ENCODE measurements at regions of chr11 and their contacts with region 1.

Region 1: GRCh38 chr11:10792398-10792975 is 16.2 kb downstream of the EIF4G2 start:
- DNase-seq: peak; percentile 87 to 93
- ATAC-seq: peak; percentile 85

Region 2: DNA sequence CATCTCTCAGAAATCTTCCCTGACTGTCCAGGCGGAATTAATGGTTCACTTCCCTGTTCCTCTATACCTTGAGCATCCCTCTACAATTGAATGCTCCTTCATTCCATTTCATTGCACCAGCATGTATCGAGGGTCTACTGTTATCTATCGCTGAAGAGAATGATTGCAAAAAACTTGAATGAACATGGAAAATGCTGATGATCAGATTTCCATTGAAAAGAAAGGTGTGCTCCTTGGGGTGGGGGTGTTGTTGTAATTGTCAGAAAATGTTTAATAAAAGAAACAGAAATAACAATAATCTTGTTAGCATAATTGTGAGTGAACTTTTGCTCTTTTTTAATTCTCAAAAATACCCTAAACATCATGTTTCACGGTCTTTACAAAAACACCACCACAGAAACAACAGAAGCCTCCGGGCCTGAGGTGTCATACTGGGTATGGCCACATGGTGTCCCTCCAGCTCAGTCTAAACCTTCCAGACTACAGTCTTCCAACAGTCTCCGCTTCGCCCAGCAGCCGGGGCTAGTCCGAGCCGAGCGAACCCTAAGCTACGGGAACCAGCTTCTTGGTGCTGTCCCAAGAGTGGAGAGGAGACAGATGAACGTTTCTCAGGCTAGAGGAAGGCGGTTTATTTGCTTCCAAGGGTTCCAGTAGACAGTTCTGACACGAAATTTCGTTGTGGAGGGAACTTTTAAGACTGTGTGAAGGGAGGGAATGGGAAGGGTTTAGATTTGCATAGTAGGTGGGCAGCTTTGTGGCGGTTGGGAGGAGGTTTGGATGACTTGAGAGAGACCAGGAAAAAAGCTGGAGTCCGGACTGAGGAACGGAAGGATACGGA is 141.2 kb after region 1 on chr11:
- intact Hi-C with region 1: loop called in 1 of 2 experiments (anchors 10 kb)
- DNase-seq: peak; percentile 91 to 92
- ATAC-seq: peak; percentile 72

Region 3: DNA sequence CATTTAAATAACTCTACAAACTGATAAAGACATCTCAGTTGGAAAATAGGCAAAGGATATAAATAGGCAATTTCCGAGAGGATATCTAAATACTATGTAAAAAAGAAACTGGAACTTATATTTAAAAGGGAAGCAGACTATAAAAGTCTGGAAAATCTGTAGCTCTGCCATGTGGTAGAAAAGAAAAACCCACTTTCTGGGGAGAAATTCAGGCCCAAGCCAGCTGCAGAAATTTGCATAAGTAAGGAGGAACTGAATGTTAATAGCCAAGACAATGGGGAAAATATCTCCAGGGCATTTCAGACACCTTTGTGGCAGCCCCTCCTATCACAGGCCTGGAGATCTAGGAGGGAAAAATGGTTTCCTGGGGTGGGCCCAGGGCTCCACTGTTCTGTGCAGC is 163.1 kb after region 1 on chr11:
- intact Hi-C with region 1: no loop called
- DNase-seq: no peak
- ATAC-seq: no peak

Region 4: GRCh38 chr11:11022125-11022730 is 229.7 kb after region 1 on chr11:
- intact Hi-C with region 1: loop called (anchors 5 to 10 kb)
- DNase-seq: no peak
- ATAC-seq: no peak

Region 5: GRCh38 chr11:11028017-11028692 is 235.7 kb after region 1 on chr11:
- intact Hi-C with region 1: loop called (anchors 5 to 10 kb)
- DNase-seq: peak; percentile 51 to 80
- ATAC-seq: peak; percentile 88

Region 6: DNA sequence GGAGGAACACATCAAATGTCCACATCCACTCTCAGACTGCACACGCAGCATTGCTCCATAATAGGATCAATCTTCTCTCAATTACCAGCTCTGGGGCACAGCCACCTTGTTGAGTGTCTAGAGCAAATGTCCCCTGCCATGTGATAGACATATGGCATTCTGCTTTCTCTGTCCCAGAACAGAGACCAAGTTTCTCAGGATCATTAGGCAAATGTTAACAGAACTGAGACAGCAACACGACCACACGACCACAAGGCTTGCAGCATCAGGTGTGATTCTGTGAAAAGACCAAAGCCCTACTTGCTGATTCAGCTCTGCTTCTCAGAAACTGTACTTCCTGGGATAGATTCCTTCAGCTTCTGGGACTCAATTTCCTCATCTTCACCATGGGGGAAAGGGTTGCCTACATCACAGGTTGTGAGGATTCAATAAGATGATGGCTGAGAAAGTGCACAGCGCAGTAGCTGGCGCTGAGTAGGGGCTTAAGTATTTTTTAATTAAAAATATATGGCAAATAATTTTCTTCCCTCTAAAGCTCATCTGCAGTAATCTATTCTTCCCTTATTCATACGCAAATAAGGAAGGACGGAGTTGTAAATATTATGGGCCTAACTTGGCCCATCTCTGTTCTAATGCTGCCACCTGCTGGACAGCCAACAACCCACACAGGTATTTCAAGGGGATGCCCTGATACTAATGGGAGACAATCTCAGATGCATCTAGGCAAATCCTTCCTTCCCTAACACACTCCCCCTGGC is 995.0 kb after region 1 on chr11:
- intact Hi-C with region 1: loop called in 1 of 2 experiments (anchors 10 kb)
- DNase-seq: peak; percentile 55 to 79
- ATAC-seq: peak; percentile 94